Caco-2 (cell line): ENCODE measurements at regions of chr4 and their contacts with region 1.

Region 1: DNA sequence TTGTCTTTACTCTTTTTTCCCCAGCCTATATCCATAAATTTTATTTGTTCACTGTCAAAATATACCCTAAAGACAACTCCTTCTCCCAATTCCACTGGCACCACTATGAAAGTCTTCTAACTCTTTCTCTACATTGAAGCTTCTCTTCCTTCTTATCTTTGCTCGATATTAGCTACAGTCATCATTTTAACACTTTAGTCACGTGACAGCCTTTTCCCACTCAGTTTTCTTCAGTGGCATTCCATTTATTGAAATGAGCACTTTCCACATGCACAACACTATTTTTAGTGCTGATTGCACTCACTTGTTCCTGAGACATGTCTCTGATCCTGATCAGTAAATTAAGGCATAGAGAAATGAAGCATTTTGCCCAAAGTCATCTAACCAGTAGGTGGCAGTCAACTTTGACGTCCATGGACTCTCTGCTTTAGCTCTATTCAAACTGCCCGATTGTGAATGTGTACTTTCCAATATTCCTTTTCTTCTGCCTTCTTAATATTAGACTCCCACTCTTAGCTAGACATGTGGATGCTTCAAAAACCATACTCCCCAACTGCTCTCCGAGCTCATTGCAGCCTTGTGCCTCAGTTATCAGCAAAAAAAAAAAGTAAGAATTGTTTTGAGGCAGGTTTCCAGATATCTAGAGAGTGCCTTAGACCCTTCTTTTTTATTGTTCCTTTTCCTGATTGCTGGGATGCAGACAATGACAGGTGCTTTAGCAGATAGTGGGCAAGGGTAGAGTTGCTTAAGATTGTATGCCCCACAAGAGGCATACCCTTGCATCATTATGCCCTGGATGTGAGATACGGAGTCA is 394.4 kb upstream of the ADGRL3 start:
- DNase-seq: peak in 1 of 2 experiments; percentile 35
- H3K4me3 ChIP-seq: no peak overlapping the region
- H3K4me3 Mint-ChIP-seq: no peak overlapping the region
- H3K27ac Mint-ChIP-seq: no peak overlapping the region
- H3K4me1 ChIP-seq: no peaks in the 10 kb centered on the region
- H3K4me1 Mint-ChIP-seq: peaks cover 8% of the 10 kb centered on the region
- H3K27me3 ChIP-seq: no peaks in the 10 kb centered on the region
- H3K27me3 Mint-ChIP-seq: no peaks in the 10 kb centered on the region
- CTCF ChIP-seq: peak; percentile 62 to 63

Region 2: DNA sequence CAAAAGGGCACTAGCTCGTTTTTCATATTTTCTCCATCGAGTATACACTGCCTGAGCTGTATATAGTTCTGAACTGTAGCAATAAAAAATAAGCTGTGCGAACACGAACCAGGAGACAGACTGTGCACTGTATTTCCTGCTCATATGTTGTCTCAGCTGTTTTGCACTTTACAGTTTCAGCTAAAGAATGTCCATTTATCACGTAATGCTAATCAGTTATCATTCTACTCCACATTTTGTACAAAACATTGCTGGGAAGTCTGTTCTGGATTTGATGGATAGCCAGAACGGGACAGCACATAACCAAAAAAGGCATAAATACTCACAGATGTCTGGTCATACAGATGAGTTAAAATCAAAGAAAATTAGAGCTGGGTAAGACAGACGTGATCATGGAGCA is 78.9 kb after region 1 on chr4:
- CTCF ChIA-PET with region 1: no interaction called
- POLR2A ChIA-PET with region 1: no interaction called
- intact Hi-C with region 1: no loop called
- DNase-seq: no peak
- H3K4me3 ChIP-seq: no peak overlapping the region
- H3K4me3 Mint-ChIP-seq: no peak overlapping the region
- H3K27ac Mint-ChIP-seq: no peak overlapping the region
- H3K4me1 ChIP-seq: no peaks in the 10 kb centered on the region
- H3K4me1 Mint-ChIP-seq: no peaks in the 10 kb centered on the region
- H3K27me3 ChIP-seq: no peaks in the 10 kb centered on the region
- H3K27me3 Mint-ChIP-seq: no peaks in the 10 kb centered on the region
- CTCF ChIP-seq: no peak

Region 3: DNA sequence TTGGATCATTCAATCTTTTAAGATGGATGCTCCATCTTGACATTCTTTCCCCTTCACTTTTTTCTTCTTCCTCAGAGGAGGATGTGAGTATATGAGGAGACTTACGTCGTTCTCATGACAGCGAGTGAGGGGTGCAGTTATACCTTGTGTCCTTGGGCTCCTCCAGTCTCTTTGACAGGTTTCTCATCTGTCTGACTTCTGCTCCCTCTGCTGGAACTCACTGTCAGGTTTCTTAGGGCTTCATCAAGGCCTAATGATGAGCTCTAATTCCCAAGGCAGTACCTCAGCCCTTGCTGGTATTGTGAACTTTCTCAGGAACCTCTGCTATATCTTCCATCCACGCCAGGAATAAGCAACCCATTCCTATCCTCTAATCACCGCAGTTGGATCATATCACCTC is 156.6 kb after region 1 on chr4:
- CTCF ChIA-PET with region 1: interaction called, 8 read pairs
- POLR2A ChIA-PET with region 1: no interaction called
- intact Hi-C with region 1: loop called (anchors 1 kb)
- DNase-seq: peak; percentile 43 to 46
- H3K4me3 ChIP-seq: no peak overlapping the region
- H3K4me3 Mint-ChIP-seq: no peak overlapping the region
- H3K27ac Mint-ChIP-seq: no peak overlapping the region
- H3K4me1 ChIP-seq: peaks cover 14% of the 10 kb centered on the region; the same call in 1 of the 2 replicates
- H3K4me1 Mint-ChIP-seq: peaks cover 8% of the 10 kb centered on the region
- H3K27me3 ChIP-seq: no peaks in the 10 kb centered on the region
- H3K27me3 Mint-ChIP-seq: no peaks in the 10 kb centered on the region
- CTCF ChIP-seq: peak; percentile 12 to 38

Region 4: GRCh38 chr4:61055036-61055435 is 249.3 kb after region 1 on chr4:
- CTCF ChIA-PET with region 1: no interaction called
- POLR2A ChIA-PET with region 1: no interaction called
- intact Hi-C with region 1: loop called (anchors 10 kb)
- DNase-seq: no peak
- H3K4me3 ChIP-seq: no peak overlapping the region
- H3K4me3 Mint-ChIP-seq: no peak overlapping the region
- H3K27ac Mint-ChIP-seq: no peak overlapping the region
- H3K4me1 ChIP-seq: no peaks in the 10 kb centered on the region
- H3K4me1 Mint-ChIP-seq: no peaks in the 10 kb centered on the region
- H3K27me3 ChIP-seq: no peaks in the 10 kb centered on the region
- H3K27me3 Mint-ChIP-seq: no peaks in the 10 kb centered on the region
- CTCF ChIP-seq: no peak

Region 5: DNA sequence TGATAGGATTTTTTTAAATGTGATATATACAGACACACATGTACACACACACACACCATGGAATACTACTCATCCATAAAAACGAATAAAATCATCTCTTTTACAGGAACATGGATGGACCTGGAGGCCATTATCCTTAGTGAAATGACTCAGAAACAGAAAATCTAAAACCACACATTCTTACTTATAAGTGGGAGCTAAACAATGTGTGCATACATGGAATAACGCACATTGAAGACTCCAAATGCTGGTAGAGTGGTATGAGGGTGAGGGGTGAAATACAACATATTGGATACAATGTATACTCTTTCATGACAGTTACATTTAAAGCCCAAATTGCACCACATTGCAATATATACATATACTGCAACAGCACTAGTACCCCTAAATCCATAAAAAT is 274.3 kb after region 1 on chr4:
- CTCF ChIA-PET with region 1: no interaction called
- POLR2A ChIA-PET with region 1: no interaction called
- intact Hi-C with region 1: no loop called
- DNase-seq: no peak
- H3K4me3 ChIP-seq: no peak overlapping the region
- H3K4me3 Mint-ChIP-seq: no peak overlapping the region
- H3K27ac Mint-ChIP-seq: no peak overlapping the region
- H3K4me1 ChIP-seq: no peaks in the 10 kb centered on the region
- H3K4me1 Mint-ChIP-seq: no peaks in the 10 kb centered on the region
- H3K27me3 ChIP-seq: no peaks in the 10 kb centered on the region
- H3K27me3 Mint-ChIP-seq: no peaks in the 10 kb centered on the region
- CTCF ChIP-seq: no peak

Region 6: DNA sequence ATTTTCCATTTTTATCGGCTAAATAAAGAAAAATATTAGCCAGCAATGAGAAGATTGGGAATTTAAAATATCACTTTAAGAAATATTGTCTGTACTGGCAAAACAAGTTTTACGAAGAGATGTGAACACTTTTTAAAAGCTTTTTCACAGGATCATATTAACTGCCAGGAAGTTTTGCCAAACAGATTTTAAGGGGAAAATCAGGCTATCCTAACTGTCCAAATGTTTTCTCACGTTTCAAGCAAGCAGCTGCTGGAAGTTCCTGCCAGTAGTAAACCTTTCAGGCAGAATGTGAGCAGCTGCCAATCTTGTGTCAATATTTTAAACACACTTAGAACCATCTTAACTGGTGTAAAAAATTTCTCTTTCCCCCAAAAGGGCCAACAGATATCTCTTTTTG is 495.6 kb after region 1 on chr4:
- CTCF ChIA-PET with region 1: no interaction called
- POLR2A ChIA-PET with region 1: no interaction called
- intact Hi-C with region 1: loop called (anchors 10 kb)
- DNase-seq: no peak
- H3K4me3 ChIP-seq: no peak overlapping the region
- H3K4me3 Mint-ChIP-seq: no peak overlapping the region
- H3K27ac Mint-ChIP-seq: no peak overlapping the region
- H3K4me1 ChIP-seq: peaks cover 9% of the 10 kb centered on the region; the same call in 1 of the 2 replicates
- H3K4me1 Mint-ChIP-seq: no peaks in the 10 kb centered on the region
- H3K27me3 ChIP-seq: no peaks in the 10 kb centered on the region
- H3K27me3 Mint-ChIP-seq: no peaks in the 10 kb centered on the region
- CTCF ChIP-seq: no peak